ENCODE measurements at regions of chr19 and their contacts with region 1.

Region 1: DNA sequence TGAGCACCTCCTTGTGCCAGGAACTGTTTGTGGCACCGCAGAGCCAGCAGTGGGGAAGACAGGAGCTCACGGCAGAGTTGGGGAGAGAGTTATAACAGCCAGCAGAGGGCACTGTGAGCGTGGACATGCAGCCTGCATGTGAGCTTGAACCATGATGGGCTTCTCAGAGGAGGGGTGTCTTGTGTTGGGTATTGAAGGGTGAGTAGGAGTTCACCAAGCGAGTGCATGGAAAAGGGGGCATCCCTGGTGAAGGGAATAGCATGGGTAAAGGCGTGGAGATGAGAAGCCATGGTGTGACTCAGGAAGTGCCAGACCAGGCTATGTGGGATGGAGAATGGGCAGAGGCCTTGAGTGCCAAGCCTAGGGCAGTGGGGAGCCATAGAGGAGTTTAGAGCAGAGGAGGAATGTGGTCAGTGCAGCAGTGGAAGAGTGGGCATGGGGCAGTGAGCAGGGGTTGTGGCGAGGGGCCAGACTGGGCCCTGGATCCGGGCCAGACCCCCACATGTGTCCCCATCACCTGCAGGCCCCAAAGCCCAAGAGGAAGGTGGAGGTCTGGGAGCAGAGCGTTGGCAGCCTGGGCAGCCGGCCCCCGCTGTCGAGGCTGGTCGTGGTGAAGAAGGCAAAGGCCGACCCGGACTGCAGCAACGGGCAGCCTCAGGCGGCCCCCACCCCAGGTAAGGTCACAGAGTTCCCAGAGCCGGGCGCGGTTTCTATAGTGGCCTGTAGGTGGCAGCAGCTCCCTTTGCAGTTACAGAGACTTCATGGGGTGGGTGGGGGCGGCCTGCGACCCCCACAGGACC is 11.8 kb upstream of the SHD start:
- DNase-seq: peak; percentile 62 to 77 (median 76)
- ATAC-seq: peak; percentile 62 to 69 (median 65)
- H3K4me3 ChIP-seq: peak overlapping the region in 2 of 3 donors; percentile 9
- H3K27ac ChIP-seq: peak overlapping the region; percentile 69 to 94 (median 70)
- H3K4me1 ChIP-seq: peaks cover 0 to 21% (median 8%) of the 10 kb centered on the region in 4 donors
- H3K27me3 ChIP-seq: no peaks in the 10 kb centered on the region
- CTCF ChIP-seq: peak; percentile 75 to 88 (median 81)
- POLR2A ChIP-seq: no peak

Region 2: DNA sequence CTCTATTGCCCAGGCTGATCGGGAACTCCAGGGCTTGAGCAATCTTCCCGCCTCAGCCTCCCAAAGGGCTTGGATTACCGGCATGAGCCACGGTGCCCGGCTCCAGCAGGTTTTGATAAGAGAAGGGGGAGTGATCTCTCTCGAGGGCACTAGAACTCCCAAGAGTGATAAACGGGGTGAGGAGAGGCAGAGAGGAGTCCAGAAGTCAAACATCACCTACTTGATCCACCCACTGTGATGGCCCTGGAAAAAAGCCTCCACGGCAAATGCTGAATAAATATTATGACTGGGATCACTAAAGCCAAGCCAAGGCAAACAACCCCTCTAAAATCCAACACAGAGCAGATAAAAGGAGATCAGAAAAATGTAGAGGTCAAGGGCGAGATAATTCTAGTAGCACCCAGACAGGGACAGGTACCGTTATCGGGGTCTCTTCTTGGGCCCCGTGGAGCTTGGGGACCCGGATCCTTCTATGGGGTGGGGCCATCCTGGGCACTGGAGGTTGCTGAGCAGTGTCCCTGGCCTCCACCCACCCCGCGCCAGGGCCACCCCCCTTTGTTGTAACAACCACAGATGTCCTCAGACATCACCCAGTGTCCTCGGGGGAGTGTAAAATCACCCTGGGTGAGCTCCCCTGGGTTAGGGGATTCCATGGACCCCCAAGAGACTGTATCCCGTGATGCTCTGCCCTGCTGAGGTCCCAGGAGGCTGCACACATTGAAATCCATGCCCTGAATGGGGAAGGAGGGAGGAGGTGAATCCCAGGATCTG is 117.6 kb before region 1 on chr19:
- intact Hi-C with region 1: no loop called
- DNase-seq: peak; percentile 81 to 90 (median 86)
- ATAC-seq: peak; percentile 32 to 63 (median 52)
- H3K4me3 ChIP-seq: no peak overlapping the region
- H3K27ac ChIP-seq: peak overlapping the region; percentile 78 to 96 (median 94)
- H3K4me1 ChIP-seq: peaks cover 0 to 51% (median 18%) of the 10 kb centered on the region in 4 donors
- H3K27me3 ChIP-seq: no peaks in the 10 kb centered on the region
- CTCF ChIP-seq: no peak
- POLR2A ChIP-seq: no peak

Region 3: DNA sequence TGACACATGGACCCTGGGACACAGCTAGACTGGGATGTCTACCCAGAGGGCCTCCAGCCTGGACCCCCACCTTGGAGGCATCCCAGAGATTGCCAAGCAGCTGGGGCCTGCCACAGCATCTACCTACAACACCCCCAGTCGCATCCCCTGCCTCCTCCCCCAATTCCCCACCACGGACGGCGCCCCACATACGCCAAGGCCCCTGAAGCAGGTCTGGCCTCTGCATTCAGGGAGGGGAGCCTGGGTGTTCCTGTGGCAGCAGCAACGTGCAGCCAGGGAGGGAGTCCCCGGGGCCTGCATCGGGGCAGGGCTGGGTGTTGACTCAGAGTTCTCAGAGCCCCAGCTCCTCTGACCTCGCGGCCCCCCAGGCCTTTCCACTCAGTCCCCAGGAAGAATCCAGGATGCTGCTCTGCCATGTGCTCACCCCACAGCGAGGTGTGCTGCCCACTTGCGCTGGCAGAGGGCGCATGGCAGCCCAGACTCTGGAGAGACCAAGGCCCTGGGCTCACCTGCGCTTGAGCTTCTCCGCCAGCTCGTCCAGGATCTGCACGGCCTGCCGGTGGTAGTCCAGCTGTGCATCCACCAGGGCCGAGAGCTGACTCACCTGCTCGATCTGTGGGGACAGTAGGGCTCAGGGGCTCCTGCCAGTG is 95.7 kb after region 1 on chr19:
- intact Hi-C with region 1: loop called in 1 of 2 experiments (anchors 5 kb)
- DNase-seq: peak in 1 of 3 donors; percentile 51
- ATAC-seq: peak; percentile 2 to 9 (median 6)
- H3K4me3 ChIP-seq: no peak overlapping the region
- H3K27ac ChIP-seq: no peak overlapping the region
- H3K4me1 ChIP-seq: peaks cover 0 to 3% (median 0%) of the 10 kb centered on the region in 4 donors
- H3K27me3 ChIP-seq: no peaks in the 10 kb centered on the region
- CTCF ChIP-seq: peak in 3 of 4 donors; percentile 6 to 26 (median 18)
- POLR2A ChIP-seq: no peak

Region 4: GRCh38 chr19:4400135-4400936 is 133.0 kb after region 1 on chr19 and contains the start of gene SH3GL1:
- intact Hi-C with region 1: no loop called
- DNase-seq: peak; percentile 92 to 94 (median 94)
- ATAC-seq: peak; percentile 68 to 77 (median 72)
- H3K4me3 ChIP-seq: peak within 1 kb of the TSS; percentile 93 to 100 (median 99)
- H3K27ac ChIP-seq: peak within 1 kb of the TSS; percentile 88 to 97 (median 97)
- H3K4me1 ChIP-seq: peaks cover 0 to 36% (median 13%) of the 10 kb centered on the region in 4 donors
- H3K27me3 ChIP-seq: no peaks in the 10 kb centered on the region
- CTCF ChIP-seq: peak; percentile 92 to 99 (median 96)
- POLR2A ChIP-seq: peak; percentile 94
- total RNA-seq, gene SH3GL1: 22.6 to 47.7 (median 25.2) TPM

Region 5: DNA sequence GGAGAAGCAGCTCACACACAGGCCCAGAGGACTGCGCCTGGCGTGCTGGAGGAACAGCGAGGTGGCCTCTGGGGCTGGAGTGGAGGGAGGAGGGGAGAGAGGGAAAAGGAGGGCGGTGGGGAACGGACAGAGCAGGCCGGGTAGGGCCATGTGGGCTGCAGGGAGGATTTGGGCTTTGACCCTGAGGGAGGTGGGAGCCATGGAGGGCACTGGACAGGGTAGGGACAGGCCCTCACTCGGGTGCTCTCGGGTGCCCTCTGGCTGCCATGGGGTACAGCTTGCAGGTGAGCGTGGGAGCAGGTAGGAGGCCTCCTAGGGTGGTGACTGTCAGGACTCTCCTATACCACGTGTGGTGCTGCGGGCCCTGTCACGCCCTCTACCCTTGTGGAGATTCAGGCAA is 228.2 kb after region 1 on chr19:
- intact Hi-C with region 1: loop called in 1 of 2 experiments (anchors 10 kb)
- DNase-seq: no peak
- ATAC-seq: peak; percentile 44 to 57 (median 53)
- H3K4me3 ChIP-seq: no peak overlapping the region
- H3K27ac ChIP-seq: no peak overlapping the region
- H3K4me1 ChIP-seq: no peaks in the 10 kb centered on the region
- H3K27me3 ChIP-seq: no peaks in the 10 kb centered on the region
- CTCF ChIP-seq: peak in 3 of 4 donors; percentile 19 to 40 (median 24)
- POLR2A ChIP-seq: no peak

Measured in right lobe of liver (tissue), 6 donors.